ENCODE measurements at regions of chr5 and their contacts with region 1.

Region 1: DNA sequence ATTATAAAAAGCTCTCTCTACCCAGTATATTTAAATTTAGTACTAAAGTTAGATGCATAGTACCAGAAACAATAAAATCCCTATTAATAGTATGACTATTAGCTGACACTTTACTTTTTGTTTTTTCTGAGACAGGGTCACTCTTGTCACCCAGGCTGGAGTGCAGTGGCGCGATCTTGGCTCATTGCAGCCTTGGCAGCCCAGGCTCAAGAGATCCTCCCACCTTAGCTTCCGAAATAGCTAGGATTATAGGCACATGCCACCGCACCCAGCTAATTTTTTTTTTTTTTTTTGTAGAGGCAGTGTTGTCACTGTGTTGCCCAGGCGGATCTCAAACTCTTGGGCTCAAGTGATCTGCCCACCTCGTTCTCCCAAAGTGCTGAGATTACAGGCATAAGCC is 8.0 kb downstream of the CCNG1 start:
- DNase-seq: peak in 1 of 5 donors; percentile 36
- ATAC-seq: peak; percentile 58 to 80 (median 67)
- H3K4me3 ChIP-seq: no peak overlapping the region
- H3K27ac ChIP-seq: no peak overlapping the region
- H3K4me1 ChIP-seq: peaks cover 0 to 19% (median under 1%) of the 10 kb centered on the region in 12 donors
- H3K27me3 ChIP-seq: no peaks in the 10 kb centered on the region
- CTCF ChIP-seq: no peak
- POLR2A ChIP-seq: no peak

Region 2: DNA sequence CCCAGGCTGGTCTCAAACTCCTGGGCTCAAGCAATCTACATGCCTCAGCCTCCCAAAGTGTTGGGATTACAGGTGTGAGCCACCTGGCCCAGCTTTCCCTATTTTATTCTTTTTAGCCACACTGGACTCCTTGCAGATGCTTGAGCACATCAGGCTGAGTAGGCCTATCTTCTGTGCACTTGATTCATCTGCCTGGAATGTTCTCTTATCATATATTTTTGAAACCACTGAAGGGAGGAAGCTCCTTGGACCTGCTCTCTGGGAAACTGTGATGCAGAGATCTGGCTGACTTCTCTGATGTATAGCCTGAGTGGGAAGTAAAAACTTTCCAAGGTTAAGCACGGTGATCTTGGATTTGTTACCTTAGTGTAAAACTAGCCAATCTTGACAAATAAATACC is 53.5 kb after region 1 on chr5:
- intact Hi-C with region 1: loop called in 1 of 10 experiments (anchors 10 kb)
- DNase-seq: no peak
- ATAC-seq: no peak
- H3K4me3 ChIP-seq: no peak overlapping the region
- H3K27ac ChIP-seq: no peak overlapping the region
- H3K4me1 ChIP-seq: peaks cover 0 to 16% (median 7%) of the 10 kb centered on the region in 12 donors
- H3K27me3 ChIP-seq: no peaks in the 10 kb centered on the region
- CTCF ChIP-seq: no peak
- POLR2A ChIP-seq: no peak